AG04449 (cell line): ENCODE measurements at regions of chr12 and their contacts with region 1.

Region 1: DNA sequence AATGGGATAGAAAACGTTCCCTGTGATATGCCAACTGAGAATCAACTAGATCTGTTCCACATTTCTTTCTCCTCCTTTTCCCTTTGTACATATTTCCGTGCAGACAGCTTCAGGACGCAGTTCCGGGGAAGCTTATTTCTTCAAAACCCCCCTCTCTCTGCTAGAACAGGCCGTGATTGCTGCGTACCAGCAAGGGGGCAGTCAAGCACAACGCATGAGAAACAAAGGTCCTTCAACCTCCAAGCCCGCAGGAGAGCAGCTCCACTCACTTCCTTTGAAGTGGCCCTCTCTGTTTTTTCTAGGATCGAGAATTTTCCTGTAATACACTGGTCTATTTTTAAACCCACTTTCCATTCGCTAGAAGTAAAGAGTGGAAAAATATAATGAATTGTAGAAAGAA is 80.8 kb downstream of the ZNF664 start:
- DNase-seq: no peak
- H3K4me3 ChIP-seq: no peak overlapping the region
- CTCF ChIP-seq: peak; percentile 71

Region 2: DNA sequence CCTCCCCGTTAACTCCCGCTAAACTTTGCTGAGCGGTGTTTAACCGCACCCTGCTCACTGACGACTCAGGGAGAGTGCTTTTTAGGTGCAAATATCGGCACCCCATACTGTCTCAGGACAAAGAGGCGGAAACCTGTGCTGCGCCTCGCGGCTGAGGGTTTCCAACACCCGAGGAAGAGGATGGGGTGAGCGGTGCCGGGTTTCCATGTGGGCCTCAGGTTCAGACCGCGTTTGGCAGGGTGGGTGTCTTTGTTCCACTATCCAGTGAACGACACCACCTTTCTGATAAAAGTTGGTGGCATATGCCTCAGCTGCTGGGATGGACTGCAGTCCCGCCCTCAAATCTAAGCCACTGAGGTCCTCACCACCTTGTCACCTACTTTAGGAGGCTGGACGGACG is 244.0 kb after region 1 on chr12:
- CTCF ChIA-PET with region 1: interaction called, 11 read pairs
- POLR2A ChIA-PET with region 1: no interaction called
- DNase-seq: no peak
- H3K4me3 ChIP-seq: no peak overlapping the region
- CTCF ChIP-seq: no peak

Region 3: DNA sequence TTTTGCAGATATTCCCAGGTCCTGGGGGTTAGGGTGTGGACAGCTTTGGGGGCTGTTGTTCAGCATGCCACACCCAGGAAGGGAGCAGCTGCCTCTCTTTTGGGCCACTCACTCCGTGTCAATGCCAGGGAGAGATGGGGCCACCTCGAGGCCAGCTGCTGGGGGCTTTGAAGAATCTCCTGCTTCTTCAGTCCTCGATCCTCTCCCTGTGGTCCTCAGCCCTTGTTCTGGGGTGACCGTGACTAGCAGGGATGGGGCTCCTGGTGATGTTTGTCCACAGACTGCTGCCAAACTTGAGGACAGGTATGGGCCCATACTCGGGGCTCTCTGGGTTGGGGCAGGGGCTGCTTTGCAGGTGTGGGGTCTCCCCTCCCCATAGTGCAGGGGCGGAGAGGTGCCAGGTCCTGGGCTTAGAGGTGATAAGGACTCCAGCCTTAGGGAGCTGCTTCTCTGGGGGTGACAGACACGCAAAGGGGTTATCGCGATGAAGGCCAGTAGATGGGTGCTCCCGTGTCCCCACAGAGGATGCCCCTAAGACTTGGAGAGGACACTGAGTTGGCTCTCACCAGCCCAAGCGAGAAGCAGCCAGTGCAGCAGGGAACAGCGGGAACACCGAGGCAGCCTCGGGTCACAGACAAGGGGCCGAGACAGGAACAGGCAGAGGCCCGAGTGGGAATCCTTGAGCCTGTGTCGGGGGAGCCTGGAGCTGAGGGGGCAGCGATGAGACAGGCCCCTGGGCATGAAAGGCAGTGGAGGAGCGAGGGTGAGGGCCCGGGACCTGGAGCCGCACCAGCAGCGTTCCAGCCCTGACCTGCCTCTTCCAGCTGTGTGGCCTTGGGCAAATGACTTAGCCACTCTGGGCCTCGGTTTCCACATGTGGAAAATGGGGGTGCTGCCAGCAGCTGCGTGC is 252.2 kb after region 1 on chr12:
- CTCF ChIA-PET with region 1: interaction called, 14 read pairs
- POLR2A ChIA-PET with region 1: no interaction called
- DNase-seq: no peak
- H3K4me3 ChIP-seq: no peak overlapping the region
- CTCF ChIP-seq: no peak

Region 4: GRCh38 chr12:124311292-124312109 is 257.6 kb after region 1 on chr12:
- CTCF ChIA-PET with region 1: interaction called, 14 read pairs
- POLR2A ChIA-PET with region 1: no interaction called
- DNase-seq: no peak
- H3K4me3 ChIP-seq: no peak overlapping the region
- CTCF ChIP-seq: no peak

Region 5: GRCh38 chr12:124321040-124321481 is 267.2 kb after region 1 on chr12:
- CTCF ChIA-PET with region 1: interaction called, 47 read pairs
- POLR2A ChIA-PET with region 1: interaction called, 3 read pairs
- DNase-seq: no peak
- H3K4me3 ChIP-seq: no peak overlapping the region
- CTCF ChIP-seq: peak; percentile 94

Region 6: GRCh38 chr12:124332068-124332672 is 278.3 kb after region 1 on chr12:
- CTCF ChIA-PET with region 1: interaction called, 12 read pairs
- POLR2A ChIA-PET with region 1: no interaction called
- DNase-seq: no peak
- H3K4me3 ChIP-seq: no peak overlapping the region
- CTCF ChIP-seq: peak; percentile 31